AG04449 (cell line): ENCODE measurements at regions of chr1 and their contacts with region 1.

Region 1: DNA sequence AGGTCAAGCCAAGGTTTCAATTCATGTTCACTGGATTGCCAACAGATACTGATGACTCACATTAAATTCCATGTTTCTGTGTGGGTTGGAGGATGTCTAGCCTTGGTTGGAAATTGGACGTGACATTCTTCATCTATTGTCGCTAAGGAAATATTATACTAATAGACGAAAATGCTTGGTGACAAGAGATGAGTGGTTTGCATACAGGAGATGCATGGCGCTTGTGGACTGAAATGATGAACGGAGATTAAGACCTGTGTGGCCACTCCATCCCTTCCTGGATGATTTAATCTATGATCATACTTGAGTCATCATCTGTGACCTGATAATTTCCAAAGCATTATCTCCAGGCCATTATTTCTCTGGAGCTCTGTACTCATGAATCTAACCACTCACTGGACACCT is 97.0 kb upstream of the CD34 start:
- DNase-seq: no peak
- H3K4me3 ChIP-seq: no peak overlapping the region
- CTCF ChIP-seq: no peak

Region 2: DNA sequence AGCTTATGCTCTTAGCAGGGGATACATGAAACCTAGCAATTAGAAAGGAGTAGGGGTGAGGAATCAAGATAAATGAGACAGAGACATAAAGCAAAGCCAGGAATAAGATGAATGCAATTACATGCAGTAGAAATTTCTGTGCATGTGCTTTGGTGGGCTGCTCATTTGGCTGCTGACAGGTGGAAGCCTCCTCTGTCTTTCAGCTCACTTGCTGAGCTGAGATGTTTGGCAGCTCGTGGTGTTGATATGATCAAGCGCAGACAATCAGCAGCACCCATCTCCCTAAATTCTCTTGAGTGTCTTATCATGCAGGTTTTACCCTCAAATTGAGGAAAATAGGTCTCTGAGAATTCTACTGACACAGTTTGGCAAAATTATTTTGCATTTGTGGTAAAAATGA is 11.3 kb after region 1 on chr1:
- CTCF ChIA-PET with region 1: interaction called, 52 read pairs
- POLR2A ChIA-PET with region 1: no interaction called
- DNase-seq: no peak
- H3K4me3 ChIP-seq: no peak overlapping the region
- CTCF ChIP-seq: no peak